Mammary epithelial cell (primary cell): ENCODE measurements at regions of chr9 and their contacts with region 1.

Region 1: DNA sequence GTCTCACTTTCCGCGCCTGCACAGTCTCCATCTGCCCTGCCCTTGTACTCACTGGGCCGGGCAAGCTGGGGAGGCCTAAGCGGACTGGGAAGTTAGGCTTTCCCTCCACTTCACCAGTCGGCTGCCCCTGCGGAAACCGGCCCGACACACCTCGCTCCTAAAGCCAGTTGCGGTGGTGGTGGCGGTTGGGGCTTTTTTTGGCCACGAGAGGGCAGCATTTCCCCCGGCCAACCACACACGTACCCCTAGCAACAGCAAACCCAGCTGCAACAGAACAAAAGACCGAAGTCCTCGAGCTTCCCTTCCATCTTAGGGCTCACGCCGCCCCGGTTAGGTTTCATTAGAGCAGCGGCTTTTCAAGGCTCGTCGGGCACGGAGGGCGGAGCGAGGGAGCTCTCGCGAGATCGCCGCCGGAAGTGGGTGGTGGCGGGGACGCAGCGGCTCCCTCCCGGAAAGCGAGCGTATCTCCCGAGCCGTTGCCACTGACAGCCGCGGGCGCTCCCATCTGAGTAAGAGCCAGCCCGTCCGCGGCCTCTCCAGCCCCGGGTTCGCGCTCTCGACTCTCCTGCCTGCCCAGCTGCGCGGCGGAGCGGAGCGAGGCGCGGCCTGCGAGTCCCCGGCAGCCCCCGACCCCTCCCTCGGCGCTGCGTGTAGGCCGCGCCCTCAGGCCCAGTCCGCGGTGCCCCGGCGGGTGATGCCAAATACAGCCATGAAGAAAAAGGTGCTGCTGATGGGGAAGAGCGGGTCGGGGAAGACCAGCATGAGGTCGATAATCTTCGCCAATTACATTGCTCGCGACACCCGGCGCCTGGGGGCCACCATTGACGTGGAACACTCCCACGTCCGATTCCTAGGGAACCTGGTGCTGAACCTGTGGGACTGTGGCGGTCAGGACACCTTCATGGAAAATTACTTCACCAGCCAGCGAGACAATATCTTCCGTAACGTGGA is at the start of gene RRAGA:
- DNase-seq: peak; percentile 97
- H3K4me3 ChIP-seq: peak within 1 kb of the TSS; percentile 55 to 68 (median 67)
- H3K27ac ChIP-seq: peak within 1 kb of the TSS; percentile 82
- H3K4me1 ChIP-seq: peaks cover 9% of the 10 kb centered on the region
- H3K27me3 ChIP-seq: no peaks in the 10 kb centered on the region
- CTCF ChIP-seq: peak; percentile 67 to 87
- total RNA-seq, gene RRAGA: 57.3 to 87.5 TPM

Region 2: GRCh38 chr9:18255158-18255629 is 794.0 kb before region 1 on chr9:
- CTCF ChIA-PET with region 1: no interaction called
- dilution Hi-C with region 1: no loop called
- in situ Hi-C with region 1: loop called in 1 of 2 experiments (anchors 25 kb)
- intact Hi-C with region 1: no loop called
- DNase-seq: peak; percentile 55
- H3K4me3 ChIP-seq: no peak overlapping the region
- H3K27ac ChIP-seq: no peak overlapping the region
- H3K4me1 ChIP-seq: peaks cover under 1% of the 10 kb centered on the region
- H3K27me3 ChIP-seq: no peaks in the 10 kb centered on the region
- CTCF ChIP-seq: peak; percentile 89 to 92

Region 3: GRCh38 chr9:19000133-19000532 is 49.1 kb before region 1 on chr9:
- CTCF ChIA-PET with region 1: no interaction called
- dilution Hi-C with region 1: no loop called
- in situ Hi-C with region 1: no loop called
- intact Hi-C with region 1: no loop called
- DNase-seq: no peak
- H3K4me3 ChIP-seq: no peak overlapping the region
- H3K27ac ChIP-seq: no peak overlapping the region
- H3K4me1 ChIP-seq: no peaks in the 10 kb centered on the region
- H3K27me3 ChIP-seq: no peaks in the 10 kb centered on the region
- CTCF ChIP-seq: no peak

Region 4: DNA sequence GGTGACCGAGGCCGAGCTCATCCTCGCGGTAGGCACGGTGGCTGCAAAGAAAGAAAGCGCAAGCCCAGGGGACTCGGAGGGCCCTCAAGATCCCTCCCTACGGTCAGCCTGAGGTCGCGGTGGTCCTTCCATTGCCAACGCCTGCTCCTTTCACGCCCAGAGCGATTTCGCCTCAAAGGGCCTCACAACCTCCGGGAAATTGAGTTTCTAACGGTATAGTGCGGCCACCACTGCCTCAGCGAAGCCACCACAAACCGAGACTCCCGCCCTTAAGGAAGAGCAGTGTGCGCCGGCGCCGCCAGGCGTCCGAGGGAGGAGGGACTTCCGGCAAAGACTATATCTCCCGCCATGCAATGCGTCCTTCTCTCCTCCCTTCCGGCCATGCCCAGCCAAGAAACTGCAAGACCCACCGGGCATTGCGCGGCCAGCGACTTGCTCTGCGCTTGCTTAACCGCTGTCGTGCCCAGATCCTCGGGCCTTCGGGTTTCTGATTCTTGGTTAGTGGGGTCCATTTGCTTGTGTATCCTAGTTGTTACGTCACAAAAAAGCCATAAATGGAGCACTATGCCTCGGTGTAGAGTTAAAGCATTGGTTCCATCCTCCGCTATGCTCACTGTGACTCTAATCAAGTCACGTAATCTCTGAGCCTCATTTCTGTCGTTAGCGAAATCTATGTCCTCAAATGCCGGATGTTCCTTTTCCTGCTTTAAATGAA is 53.5 kb after region 1 on chr9 and contains the start of gene HAUS6:
- CTCF ChIA-PET with region 1: no interaction called
- dilution Hi-C with region 1: no loop called
- in situ Hi-C with region 1: no loop called
- intact Hi-C with region 1: loop called (anchors 5 kb)
- DNase-seq: peak; percentile 93
- H3K4me3 ChIP-seq: peak within 1 kb of the TSS; percentile 68 to 93 (median 92)
- H3K27ac ChIP-seq: peak within 1 kb of the TSS; percentile 91
- H3K4me1 ChIP-seq: peaks cover 21% of the 10 kb centered on the region
- H3K27me3 ChIP-seq: no peaks in the 10 kb centered on the region
- CTCF ChIP-seq: peak in 1 of 2 donors; percentile 60
- total RNA-seq, gene HAUS6: 19.5 to 21.2 TPM

Region 5: DNA sequence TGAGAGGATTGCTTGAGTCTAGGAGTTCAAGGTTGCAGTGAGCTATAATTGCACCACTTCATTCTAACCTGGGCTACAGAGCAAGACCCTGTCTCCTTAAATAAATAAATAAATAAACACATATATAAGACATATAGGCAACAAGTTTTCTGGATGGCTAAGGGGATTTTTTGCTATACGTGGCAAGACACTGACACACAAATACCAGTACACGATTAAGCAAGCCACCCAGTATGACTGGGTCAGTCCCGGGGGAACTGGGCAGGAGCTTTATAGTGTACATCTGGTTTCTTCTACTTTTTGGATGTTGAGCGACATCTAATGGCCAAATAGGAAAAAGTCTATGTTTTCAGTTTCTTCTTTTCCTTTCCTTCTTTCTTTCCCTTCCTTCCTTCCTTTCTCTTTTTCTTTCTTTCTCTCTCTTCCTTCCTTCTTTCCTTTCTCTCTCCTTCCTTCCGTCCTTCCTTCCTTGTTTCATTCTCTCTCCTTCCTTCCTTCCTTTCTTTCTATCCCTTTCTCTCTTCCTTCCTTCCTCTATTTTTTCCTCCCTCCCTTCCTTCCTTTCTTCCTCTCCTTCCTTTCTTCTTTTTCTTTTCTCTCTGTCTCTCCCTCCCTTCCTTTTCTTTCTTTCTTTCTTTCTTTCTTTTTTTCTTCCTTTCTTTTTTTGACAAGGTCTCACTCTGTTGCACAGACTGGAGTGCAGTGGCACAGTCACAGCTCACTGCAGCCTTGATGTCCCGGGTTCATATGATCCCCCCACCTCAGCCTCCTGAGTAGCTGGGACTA is 125.1 kb after region 1 on chr9:
- CTCF ChIA-PET with region 1: interaction called, 7 read pairs
- dilution Hi-C with region 1: no loop called
- in situ Hi-C with region 1: no loop called
- intact Hi-C with region 1: loop called (anchors 1 kb)
- DNase-seq: peak; percentile 78
- H3K4me3 ChIP-seq: no peak overlapping the region
- H3K27ac ChIP-seq: peak overlapping the region; percentile 31
- H3K4me1 ChIP-seq: no peaks in the 10 kb centered on the region
- H3K27me3 ChIP-seq: no peaks in the 10 kb centered on the region
- CTCF ChIP-seq: peak; percentile 32 to 61

Region 6: DNA sequence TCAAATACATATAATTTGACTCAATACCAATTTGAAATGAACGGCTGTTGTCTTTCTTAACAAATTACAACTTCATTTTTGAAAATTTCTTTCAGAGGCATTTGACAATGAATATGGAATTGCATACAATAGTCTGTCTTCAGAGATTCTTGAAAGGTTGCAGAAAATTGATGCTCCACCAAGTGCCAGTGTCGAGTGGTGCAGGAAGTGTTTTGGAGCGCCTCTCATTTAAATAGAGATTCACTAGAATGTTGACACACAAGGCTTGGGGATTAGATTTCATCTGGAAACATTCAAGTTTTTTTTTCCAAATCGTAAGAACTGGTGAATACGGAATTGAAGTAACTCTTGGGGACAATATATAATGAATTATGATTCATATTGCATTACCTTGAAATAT is 322.7 kb after region 1 on chr9:
- CTCF ChIA-PET with region 1: no interaction called
- dilution Hi-C with region 1: no loop called
- in situ Hi-C with region 1: loop called in 1 of 2 experiments (anchors 25 kb)
- intact Hi-C with region 1: loop called (anchors 5 kb)
- DNase-seq: no peak
- H3K4me3 ChIP-seq: no peak overlapping the region
- H3K27ac ChIP-seq: no peak overlapping the region
- H3K4me1 ChIP-seq: no peaks in the 10 kb centered on the region
- H3K27me3 ChIP-seq: no peaks in the 10 kb centered on the region
- CTCF ChIP-seq: no peak

Region 7: GRCh38 chr9:19408693-19409400 is 359.6 kb after region 1 on chr9 and contains the start of gene ACER2:
- CTCF ChIA-PET with region 1: no interaction called
- dilution Hi-C with region 1: no loop called
- in situ Hi-C with region 1: loop called in 1 of 2 experiments (anchors 25 kb)
- intact Hi-C with region 1: no loop called
- DNase-seq: peak; percentile 91
- H3K4me3 ChIP-seq: peak within 1 kb of the TSS; percentile 53 to 74 (median 72)
- H3K27ac ChIP-seq: peak within 1 kb of the TSS; percentile 35
- H3K4me1 ChIP-seq: peaks cover 35% of the 10 kb centered on the region
- H3K27me3 ChIP-seq: no peaks in the 10 kb centered on the region
- CTCF ChIP-seq: peak in 1 of 2 donors; percentile 35
- total RNA-seq, gene ACER2: 9.1 to 38.3 TPM